B cell (primary cell): ENCODE measurements at regions of chr2 and their contacts with region 1.

Region 1: DNA sequence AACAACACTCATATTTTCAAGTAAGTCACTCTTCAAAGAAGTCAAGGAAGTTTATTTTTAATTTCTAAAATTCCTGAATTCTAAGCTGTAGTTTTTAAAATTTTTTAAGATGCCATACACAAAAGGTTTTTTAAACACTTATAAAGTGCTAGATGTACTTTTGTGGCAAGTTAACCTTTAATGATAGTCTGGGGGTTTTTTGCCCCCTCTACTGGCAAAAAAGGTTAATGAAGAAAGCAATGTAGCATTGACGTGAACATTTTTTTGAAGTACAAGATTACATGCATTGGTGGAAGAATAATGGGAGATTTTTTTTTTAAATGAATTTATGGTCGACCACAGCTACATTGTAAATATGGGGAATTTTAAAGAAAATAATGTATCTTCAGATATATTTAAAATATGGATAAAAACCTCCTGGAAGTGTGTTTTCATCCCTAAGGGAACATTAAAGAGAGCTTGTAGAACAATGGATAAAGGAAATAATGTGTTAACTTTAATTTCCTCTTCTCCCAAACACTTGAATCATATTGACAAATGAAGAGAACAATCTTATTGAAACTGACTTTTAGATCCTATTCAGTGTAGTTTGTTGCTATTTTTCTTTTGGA is 12.6 kb downstream of the ITPRID2 start:
- DNase-seq: peak; percentile 58
- ATAC-seq: peak; percentile 49
- H3K4me3 ChIP-seq: no peak overlapping the region
- H3K4me3 Mint-ChIP-seq: no peak overlapping the region
- H3K27ac ChIP-seq: no peak overlapping the region
- H3K27ac Mint-ChIP-seq: no peak overlapping the region
- H3K4me1 ChIP-seq: peaks cover 0 to 4% of the 10 kb centered on the region in 2 donors
- H3K4me1 Mint-ChIP-seq: peaks cover 2% of the 10 kb centered on the region
- H3K27me3 ChIP-seq: no peaks in the 10 kb centered on the region
- H3K27me3 Mint-ChIP-seq: no peaks in the 10 kb centered on the region
- CTCF ChIP-seq: peak; percentile 83

Region 2: DNA sequence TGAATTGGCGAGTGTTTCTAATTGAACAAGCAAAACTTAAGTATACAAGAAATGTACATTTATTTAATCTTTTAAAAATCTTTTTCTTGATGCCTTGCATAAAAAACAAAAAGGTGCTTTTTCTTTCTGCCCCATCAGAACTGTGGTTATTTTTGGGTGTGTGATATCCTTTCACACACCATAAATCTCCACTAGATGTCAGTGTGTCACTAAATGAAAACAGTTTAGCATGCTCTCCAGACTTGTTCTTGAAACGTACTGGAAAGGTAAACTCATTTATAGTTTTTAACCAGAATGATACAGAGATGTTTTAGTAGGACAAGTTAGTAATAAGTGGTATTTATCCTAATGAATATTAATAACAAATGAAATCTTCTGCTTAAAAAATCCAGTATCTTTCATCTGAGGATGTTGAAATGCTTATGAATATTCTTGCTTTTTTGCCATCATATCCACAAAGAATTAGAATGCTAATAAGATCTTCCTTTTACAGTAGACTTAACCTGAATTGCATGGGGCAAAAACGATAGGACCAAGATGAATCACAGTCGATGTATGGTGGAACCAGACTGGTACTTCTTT is 826.9 kb before region 1 on chr2:
- CTCF ChIA-PET with region 1: interaction called, 3 read pairs
- POLR2A ChIA-PET with region 1: no interaction called
- intact Hi-C with region 1: loop called (anchors 1 kb)
- DNase-seq: peak; percentile 70
- ATAC-seq: peak; percentile 65
- H3K4me3 ChIP-seq: no peak overlapping the region
- H3K4me3 Mint-ChIP-seq: no peak overlapping the region
- H3K27ac ChIP-seq: no peak overlapping the region
- H3K27ac Mint-ChIP-seq: no peak overlapping the region
- H3K4me1 ChIP-seq: no peaks in the 10 kb centered on the region
- H3K4me1 Mint-ChIP-seq: peaks cover 5% of the 10 kb centered on the region
- H3K27me3 ChIP-seq: no peaks in the 10 kb centered on the region
- H3K27me3 Mint-ChIP-seq: no peaks in the 10 kb centered on the region
- CTCF ChIP-seq: peak; percentile 85

Region 3: DNA sequence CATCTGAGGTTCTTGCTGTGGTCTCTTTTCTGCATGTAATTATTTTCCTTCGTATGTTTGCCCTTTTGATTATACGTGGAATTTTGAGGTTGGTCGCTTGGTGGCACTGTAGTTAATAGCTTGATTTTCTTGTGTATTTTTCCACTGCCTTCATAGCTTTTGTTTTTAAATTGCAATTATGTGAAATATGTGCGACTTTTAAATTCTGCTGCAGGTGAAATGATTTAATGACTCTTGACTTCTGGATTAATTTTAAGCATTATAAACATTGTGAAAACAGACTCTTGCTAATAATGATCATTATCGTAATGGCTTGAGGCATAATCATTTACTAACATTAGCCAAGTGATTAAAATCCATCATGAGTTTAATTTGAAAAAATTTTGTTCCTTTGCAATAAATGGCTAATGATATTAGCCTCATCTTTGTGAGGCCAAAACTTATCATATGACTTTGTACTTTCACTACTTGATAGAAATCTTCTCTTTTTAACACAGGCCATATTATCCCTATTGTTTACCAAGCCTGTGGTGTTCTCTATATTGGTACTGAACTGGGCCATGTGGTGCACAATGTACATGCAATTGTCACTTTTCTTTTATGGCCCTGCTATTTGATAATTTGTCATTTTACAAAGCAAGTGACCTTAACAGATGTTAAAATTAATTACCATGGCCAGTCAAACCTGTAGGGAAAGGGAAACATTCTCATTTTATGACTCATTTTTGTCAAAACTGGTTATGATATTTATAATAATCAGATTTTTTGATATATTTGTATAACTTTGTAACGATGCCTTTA is 161.0 kb before region 1 on chr2:
- CTCF ChIA-PET with region 1: interaction called, 60 read pairs
- POLR2A ChIA-PET with region 1: no interaction called
- intact Hi-C with region 1: loop called (anchors 1 kb)
- DNase-seq: peak; percentile 49
- ATAC-seq: no peak
- H3K4me3 ChIP-seq: no peak overlapping the region
- H3K4me3 Mint-ChIP-seq: no peak overlapping the region
- H3K27ac ChIP-seq: no peak overlapping the region
- H3K27ac Mint-ChIP-seq: no peak overlapping the region
- H3K4me1 ChIP-seq: no peaks in the 10 kb centered on the region
- H3K4me1 Mint-ChIP-seq: no peaks in the 10 kb centered on the region
- H3K27me3 ChIP-seq: no peaks in the 10 kb centered on the region
- H3K27me3 Mint-ChIP-seq: peaks cover 4% of the 10 kb centered on the region
- CTCF ChIP-seq: peak; percentile 74